ENCODE measurements at regions of chr13 and their contacts with region 1.

Region 1: DNA sequence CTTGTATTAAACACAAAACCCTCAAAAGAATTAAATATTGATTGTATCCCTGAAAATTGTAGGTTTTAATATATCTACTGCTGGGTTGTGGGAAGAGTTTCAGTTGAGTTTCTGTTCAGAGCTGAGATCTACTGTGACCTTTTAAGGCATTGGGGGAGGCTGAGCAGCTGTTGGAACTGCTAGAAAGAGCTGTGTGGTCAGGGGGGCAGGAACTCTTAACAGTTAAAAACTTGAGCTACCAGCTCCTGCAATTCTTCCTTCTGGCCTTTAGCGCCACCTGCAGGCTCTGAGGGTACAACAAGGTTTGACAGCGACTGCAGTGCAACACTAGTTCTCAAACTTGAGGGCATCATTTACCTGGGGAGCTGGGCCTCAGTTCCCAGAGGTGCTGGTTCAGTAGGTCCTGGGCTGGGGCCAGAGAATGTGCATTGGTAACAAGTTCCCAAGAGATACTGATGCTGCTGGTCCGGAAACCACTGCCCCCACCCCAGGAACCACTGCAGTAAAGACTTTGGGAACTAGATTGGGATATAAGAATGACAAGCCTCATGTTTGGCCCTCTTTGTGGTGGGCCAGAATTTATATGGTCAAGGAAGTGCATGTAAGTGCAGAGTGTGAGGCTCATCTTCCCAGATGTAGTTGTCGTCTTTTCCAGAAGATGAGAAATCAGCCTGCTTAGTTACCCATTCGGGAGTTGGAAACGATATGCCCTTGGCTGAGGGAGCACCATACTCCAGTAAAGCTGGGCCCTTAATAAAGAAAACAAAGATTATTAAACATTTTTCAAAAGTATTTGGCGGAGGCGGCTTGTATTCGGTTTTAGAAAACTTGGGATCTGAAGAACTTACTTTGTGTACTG is 2.6 kb downstream of the RNASEH2B start:
- DNase-seq: peak; percentile 97
- H3K4me3 Mint-ChIP-seq: peak overlapping the region; percentile 94
- H3K27ac Mint-ChIP-seq: peak overlapping the region; percentile 75
- H3K4me1 Mint-ChIP-seq: peaks cover 46% of the 10 kb centered on the region
- H3K27me3 Mint-ChIP-seq: no peaks in the 10 kb centered on the region

Region 2: DNA sequence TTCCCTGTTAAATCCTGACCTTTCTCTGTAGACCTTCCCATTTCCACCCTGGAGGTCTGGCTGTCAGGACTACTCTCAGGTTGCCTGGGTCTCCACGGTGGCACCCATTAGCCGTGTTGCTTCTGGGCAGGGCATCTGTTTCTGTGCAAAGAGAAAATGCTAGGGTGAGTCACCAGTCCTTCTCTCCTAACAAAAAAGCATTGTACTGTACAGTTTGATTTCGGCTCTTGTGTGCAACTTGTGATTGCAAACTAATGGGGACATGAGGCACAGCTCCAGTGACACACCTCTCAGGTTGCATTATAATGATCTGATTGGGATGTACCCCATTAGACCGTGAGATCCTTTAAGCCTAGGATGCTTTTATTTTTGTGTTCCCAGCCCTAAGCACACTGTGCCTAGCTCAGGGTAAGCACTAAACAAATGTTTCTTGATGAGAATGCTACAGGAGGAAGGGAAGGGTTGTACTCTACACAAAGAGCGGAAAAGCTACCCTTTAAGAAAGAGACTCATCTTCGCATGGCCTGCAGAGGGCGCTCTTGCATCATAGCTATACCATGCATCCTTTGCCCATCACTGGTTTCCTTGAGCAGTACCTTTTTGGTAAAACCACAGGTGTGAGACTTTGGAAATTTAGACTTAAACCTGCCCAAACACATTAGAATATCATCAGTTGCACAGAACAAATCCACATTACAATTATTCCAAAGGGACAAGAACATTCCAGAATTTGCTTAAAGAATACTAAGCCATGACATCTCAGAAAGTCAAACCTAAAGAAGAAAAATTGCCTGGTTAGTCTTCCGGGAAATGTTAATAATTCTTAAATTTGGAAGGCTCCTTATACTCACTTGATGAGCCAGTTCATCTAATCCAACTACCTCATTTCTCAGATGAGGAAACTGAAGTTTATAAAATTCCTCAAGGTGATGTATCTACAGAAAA is 935.6 kb before region 1 on chr13:
- CTCF ChIA-PET with region 1: interaction called, 21 read pairs
- intact Hi-C with region 1: loop called (anchors 1 kb)
- DNase-seq: peak; percentile 85
- H3K4me3 Mint-ChIP-seq: no peak overlapping the region
- H3K27ac Mint-ChIP-seq: no peak overlapping the region
- H3K4me1 Mint-ChIP-seq: no peaks in the 10 kb centered on the region
- H3K27me3 Mint-ChIP-seq: no peaks in the 10 kb centered on the region

Region 3: DNA sequence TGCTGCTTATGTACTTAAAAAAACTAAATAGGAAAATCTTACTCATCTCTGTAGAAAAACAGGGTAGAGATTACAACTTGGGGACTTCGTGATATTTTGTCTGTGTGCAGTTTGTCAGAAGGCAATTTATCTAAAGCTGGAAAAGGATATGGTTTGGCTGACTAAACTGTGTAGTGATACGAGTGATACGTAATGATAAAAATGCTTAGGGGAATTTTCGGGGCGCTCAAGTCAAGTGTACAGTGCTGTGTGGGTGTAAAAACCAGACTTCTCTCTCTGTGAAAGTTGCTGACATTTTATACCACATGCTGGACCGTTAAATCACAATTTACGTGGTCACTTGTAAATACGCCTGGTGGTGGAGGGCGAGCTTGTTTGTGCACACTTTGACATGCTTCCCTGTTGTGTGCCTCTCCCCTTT is 675.3 kb before region 1 on chr13:
- CTCF ChIA-PET with region 1: no interaction called
- intact Hi-C with region 1: loop called (anchors 5 kb)
- DNase-seq: peak; percentile 62
- H3K4me3 Mint-ChIP-seq: no peak overlapping the region
- H3K27ac Mint-ChIP-seq: peak overlapping the region; percentile 61
- H3K4me1 Mint-ChIP-seq: peaks cover 48% of the 10 kb centered on the region
- H3K27me3 Mint-ChIP-seq: peaks cover 12% of the 10 kb centered on the region

Region 4: GRCh38 chr13:50425772-50426171 is 486.4 kb before region 1 on chr13:
- CTCF ChIA-PET with region 1: no interaction called
- intact Hi-C with region 1: loop called (anchors 5 kb)
- DNase-seq: no peak
- H3K4me3 Mint-ChIP-seq: no peak overlapping the region
- H3K27ac Mint-ChIP-seq: no peak overlapping the region
- H3K4me1 Mint-ChIP-seq: peaks cover 23% of the 10 kb centered on the region
- H3K27me3 Mint-ChIP-seq: no peaks in the 10 kb centered on the region

Region 5: DNA sequence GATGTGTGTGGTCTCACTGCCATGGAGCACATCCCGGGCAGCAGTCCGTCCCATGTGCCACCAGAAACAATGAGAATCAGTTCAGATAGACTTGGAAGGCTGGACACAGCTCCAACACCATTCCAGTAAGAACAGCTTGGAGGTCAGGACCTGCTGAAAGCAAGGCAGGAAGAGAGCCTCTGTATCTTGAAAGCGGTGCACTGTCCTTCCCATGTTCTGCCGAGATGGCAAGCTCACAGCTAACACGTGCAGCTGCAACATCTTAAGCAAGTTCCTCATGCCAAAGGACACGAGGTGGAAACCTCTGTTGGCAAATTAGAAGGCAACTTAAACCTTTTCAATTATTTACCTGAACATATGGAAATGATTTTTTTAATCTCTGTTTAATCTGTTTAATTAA is 244.1 kb before region 1 on chr13:
- CTCF ChIA-PET with region 1: no interaction called
- intact Hi-C with region 1: no loop called
- DNase-seq: no peak
- H3K4me3 Mint-ChIP-seq: no peak overlapping the region
- H3K27ac Mint-ChIP-seq: no peak overlapping the region
- H3K4me1 Mint-ChIP-seq: no peaks in the 10 kb centered on the region
- H3K27me3 Mint-ChIP-seq: peaks cover 2% of the 10 kb centered on the region

Region 6: DNA sequence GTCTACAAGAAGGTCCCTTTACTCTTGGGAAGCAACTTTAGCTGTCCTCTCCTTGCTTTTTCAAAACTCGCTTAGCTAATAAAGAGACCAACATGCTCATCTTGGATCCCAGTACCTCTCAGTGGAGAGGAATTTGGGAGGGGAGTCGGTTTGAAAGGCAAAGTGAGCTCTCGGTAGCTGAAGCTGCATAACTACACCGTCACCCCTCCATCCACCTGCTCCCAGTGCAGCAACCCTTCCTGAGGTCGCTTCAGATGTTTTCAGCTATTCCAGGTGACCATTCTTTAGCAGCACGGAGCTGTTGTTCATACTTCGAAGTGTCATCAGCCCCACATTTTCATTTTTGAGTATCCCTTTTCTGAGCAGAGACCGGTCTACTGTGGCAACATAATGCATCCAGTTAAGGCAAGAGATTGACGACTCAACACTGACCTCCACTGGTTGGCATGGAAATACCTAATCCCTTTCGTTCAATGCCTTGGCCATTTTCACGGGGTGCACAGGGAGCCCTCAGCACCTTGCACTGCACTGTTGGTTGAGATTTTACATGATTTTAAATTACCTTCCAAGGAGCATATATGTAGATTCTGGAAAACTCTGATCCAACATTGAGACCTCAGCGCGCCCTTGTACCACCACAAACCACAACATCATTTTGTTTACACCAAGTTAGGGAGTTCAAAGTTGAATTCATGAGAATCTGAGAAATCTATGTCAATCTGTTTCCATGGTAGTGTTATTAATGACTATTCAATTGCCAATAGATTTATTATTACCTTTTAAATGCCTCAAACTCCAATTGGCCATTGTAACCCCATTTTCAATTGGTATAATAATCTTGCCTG is 110.9 kb before region 1 on chr13:
- CTCF ChIA-PET with region 1: interaction called, 14 read pairs
- intact Hi-C with region 1: loop called (anchors 1 kb)
- DNase-seq: peak; percentile 80
- H3K4me3 Mint-ChIP-seq: no peak overlapping the region
- H3K27ac Mint-ChIP-seq: no peak overlapping the region
- H3K4me1 Mint-ChIP-seq: peaks cover 5% of the 10 kb centered on the region
- H3K27me3 Mint-ChIP-seq: no peaks in the 10 kb centered on the region

Region 7: GRCh38 chr13:50893211-50893852 is 18.8 kb before region 1 on chr13:
- CTCF ChIA-PET with region 1: interaction called, 65 read pairs
- intact Hi-C with region 1: loop called (anchors 1 kb)
- DNase-seq: peak; percentile 41
- H3K4me3 Mint-ChIP-seq: peak overlapping the region; percentile 36
- H3K27ac Mint-ChIP-seq: peak overlapping the region; percentile 79
- H3K4me1 Mint-ChIP-seq: peaks cover 38% of the 10 kb centered on the region
- H3K27me3 Mint-ChIP-seq: no peaks in the 10 kb centered on the region